ENCODE measurements at regions of chr12 and their contacts with region 1.

Region 1: GRCh38 chr12:67928621-67929388 is 60.4 kb upstream of the IFNG-AS1 start:
- DNase-seq: no peak
- H3K4me3 ChIP-seq: no peak overlapping the region
- H3K27ac ChIP-seq: no peak overlapping the region
- H3K4me1 ChIP-seq: peaks cover 22% of the 10 kb centered on the region
- H3K27me3 ChIP-seq: no peaks in the 10 kb centered on the region
- CTCF ChIP-seq: no peak

Region 2: GRCh38 chr12:67546746-67547145 is 382.1 kb before region 1 on chr12:
- CTCF ChIA-PET with region 1: no interaction called
- POLR2A ChIA-PET with region 1: interaction called, 10 read pairs
- intact Hi-C with region 1: no loop called
- DNase-seq: no peak
- H3K4me3 ChIP-seq: no peak overlapping the region
- H3K27ac ChIP-seq: no peak overlapping the region
- H3K4me1 ChIP-seq: no peaks in the 10 kb centered on the region
- H3K27me3 ChIP-seq: no peaks in the 10 kb centered on the region
- CTCF ChIP-seq: no peak

Region 3: GRCh38 chr12:67827820-67828383 is 100.9 kb before region 1 on chr12:
- CTCF ChIA-PET with region 1: no interaction called
- POLR2A ChIA-PET with region 1: no interaction called
- intact Hi-C with region 1: loop called (anchors 10 kb)
- DNase-seq: peak; percentile 47 to 85
- H3K4me3 ChIP-seq: peak overlapping the region; percentile 53
- H3K27ac ChIP-seq: peak overlapping the region; percentile 74
- H3K4me1 ChIP-seq: peaks cover 23% of the 10 kb centered on the region
- H3K27me3 ChIP-seq: no peaks in the 10 kb centered on the region
- CTCF ChIP-seq: no peak